ENCODE measurements at regions of chr7 and their contacts with region 1.

Region 1: DNA sequence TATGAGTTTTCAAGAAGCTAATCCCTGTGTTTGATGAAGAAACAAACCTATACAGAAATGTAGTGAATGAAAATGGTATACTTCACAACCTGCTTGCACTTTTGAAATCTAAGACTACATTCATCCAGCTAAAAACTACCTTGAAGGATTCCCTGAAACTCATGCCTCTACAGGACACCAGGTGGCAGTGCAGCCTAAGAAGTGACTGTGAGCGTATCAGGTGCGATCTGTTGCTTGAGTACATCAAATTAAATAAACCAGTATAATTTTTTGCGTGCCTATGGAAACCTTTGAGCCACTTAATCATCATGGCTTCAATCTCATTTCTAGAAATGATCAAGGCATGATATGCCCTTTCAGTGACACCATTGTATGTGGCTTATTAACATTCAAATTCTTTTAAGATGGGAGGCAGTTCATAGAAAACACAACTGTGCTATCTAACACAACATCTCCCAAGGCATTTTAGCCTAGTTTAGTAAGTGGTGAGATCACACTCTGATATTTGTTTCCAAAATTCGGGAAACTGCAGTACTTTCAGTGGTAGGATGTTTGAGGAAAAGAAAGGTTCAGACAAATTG is 57.4 kb downstream of the PPP1R17 start:
- DNase-seq: peak; percentile 59
- ATAC-seq: peak; percentile 87
- H3K4me3 ChIP-seq: no peak overlapping the region
- H3K27ac ChIP-seq: no peak overlapping the region
- H3K4me1 ChIP-seq: no peaks in the 10 kb centered on the region
- H3K27me3 ChIP-seq: peaks cover 13% of the 10 kb centered on the region
- CTCF ChIP-seq: peak; percentile 83

Region 2: DNA sequence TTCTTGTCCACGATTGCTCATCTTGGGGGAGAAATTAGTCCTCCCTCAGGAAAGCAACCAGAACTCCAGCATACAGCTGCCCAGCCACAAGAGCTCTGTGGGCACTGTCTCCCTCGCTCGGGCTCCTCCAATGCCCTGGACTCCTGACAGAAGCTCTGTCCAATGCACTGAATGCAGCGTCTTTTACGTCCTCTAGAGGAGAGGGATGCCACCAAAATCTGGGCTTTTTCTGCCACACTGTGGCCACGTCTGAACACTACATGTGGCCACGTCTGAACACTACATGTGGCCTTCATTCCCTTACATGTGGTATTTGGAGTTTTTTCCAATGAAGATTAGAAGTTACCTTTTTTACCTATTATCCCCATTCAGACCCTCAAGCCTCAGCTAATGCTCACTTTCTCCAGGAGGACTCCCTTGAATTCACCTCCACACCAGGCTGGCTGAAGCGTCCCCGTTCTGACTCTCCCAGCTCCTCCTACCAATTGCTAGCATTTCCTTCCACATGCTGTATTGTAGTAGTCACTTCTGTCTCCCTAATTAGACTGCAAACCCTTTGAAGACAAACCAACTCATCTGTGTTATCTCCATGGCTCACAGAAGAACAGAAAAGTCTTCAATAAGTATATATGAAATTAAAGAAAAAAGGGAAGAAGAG is 460.1 kb after region 1 on chr7:
- CTCF ChIA-PET with region 1: interaction called, 5 read pairs
- POLR2A ChIA-PET with region 1: no interaction called
- in situ Hi-C with region 1: no loop called
- intact Hi-C with region 1: loop called (anchors 1 kb)
- DNase-seq: peak; percentile 65
- ATAC-seq: peak; percentile 96
- H3K4me3 ChIP-seq: peak overlapping the region; percentile 15 to 23
- H3K27ac ChIP-seq: no peak overlapping the region
- H3K4me1 ChIP-seq: no peaks in the 10 kb centered on the region
- H3K27me3 ChIP-seq: peaks cover 7% of the 10 kb centered on the region
- CTCF ChIP-seq: peak; percentile 81

Region 3: GRCh38 chr7:32347244-32347828 is 603.0 kb after region 1 on chr7:
- CTCF ChIA-PET with region 1: no interaction called
- POLR2A ChIA-PET with region 1: no interaction called
- in situ Hi-C with region 1: no loop called
- intact Hi-C with region 1: loop called (anchors 10 kb)
- DNase-seq: peak; percentile 12
- ATAC-seq: no peak
- H3K4me3 ChIP-seq: no peak overlapping the region
- H3K27ac ChIP-seq: no peak overlapping the region
- H3K4me1 ChIP-seq: no peaks in the 10 kb centered on the region
- H3K27me3 ChIP-seq: no peaks in the 10 kb centered on the region
- CTCF ChIP-seq: peak; percentile 84